ENCODE measurements at regions of chr5 and their contacts with region 1.

Region 1: GRCh38 chr5:91383027-91383955 is at the start of gene ARRDC3:
- DNase-seq: peak; percentile 97
- ATAC-seq: peak; percentile 43
- H3K4me3 Mint-ChIP-seq: peak within 1 kb of the TSS; percentile 93
- H3K27ac Mint-ChIP-seq: peak within 1 kb of the TSS; percentile 97
- H3K4me1 Mint-ChIP-seq: peaks cover 28% of the 10 kb centered on the region
- H3K27me3 Mint-ChIP-seq: no peaks in the 10 kb centered on the region
- CTCF ChIP-seq: no peak
- total RNA-seq, gene ARRDC3: 56.3 and 65.3 TPM in 2 replicates

Region 2: DNA sequence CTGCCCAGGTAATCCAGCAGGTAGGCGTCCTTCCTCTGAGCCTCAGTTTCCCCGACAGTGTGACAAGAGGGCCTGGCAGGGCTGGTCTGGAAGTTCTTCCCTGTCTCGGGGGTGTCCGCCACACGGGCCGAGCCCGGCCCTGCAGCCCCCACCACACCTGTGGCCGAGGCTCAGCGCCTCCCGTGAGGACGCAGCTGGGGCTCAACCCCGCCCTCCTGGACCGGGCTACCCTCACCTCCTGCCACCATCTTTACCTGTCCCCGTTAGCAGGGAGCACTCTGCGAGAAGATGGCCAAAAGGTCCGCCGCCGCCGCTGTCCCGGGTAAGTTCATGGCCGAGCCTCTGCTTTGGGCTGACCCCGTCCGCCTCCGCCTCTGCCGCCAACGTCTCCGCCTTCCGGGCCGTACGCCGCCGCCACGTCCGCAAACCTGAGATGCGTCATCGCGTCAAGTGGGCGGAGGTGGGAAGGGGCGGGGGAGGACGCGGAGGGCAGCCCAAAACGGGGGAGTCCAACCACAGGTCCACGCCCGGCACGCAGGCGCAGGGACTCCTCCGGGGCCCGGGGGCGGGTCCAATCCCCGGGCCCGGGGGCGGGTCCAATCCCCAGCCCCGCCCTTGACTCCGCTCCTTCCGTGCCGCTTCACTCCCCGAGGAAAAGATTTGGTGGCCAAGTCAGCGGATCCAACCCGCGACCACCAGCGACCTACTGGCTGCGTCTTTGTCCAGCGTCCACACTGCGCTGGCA is 853.9 kb before region 1 on chr5 and contains the start of gene LYSMD3:
- CTCF ChIA-PET with region 1: no interaction called
- POLR2A ChIA-PET with region 1: interaction called, 8 read pairs
- intact Hi-C with region 1: loop called (anchors 2 kb)
- DNase-seq: peak; percentile 95
- ATAC-seq: peak; percentile 93
- H3K4me3 Mint-ChIP-seq: peak within 1 kb of the TSS; percentile 100
- H3K27ac Mint-ChIP-seq: peak within 1 kb of the TSS; percentile 97
- H3K4me1 Mint-ChIP-seq: peaks cover 33% of the 10 kb centered on the region
- H3K27me3 Mint-ChIP-seq: peaks cover 20% of the 10 kb centered on the region
- CTCF ChIP-seq: no peak
- total RNA-seq, gene LYSMD3: 18.3 and 18.4 TPM in 2 replicates

Region 3: GRCh38 chr5:91101600-91102379 is 281.5 kb before region 1 on chr5:
- CTCF ChIA-PET with region 1: interaction called, 46 read pairs
- POLR2A ChIA-PET with region 1: interaction called, 5 read pairs
- intact Hi-C with region 1: loop called (anchors 1 kb)
- DNase-seq: no peak
- ATAC-seq: peak; percentile 92
- H3K4me3 Mint-ChIP-seq: no peak overlapping the region
- H3K27ac Mint-ChIP-seq: no peak overlapping the region
- H3K4me1 Mint-ChIP-seq: no peaks in the 10 kb centered on the region
- H3K27me3 Mint-ChIP-seq: no peaks in the 10 kb centered on the region
- CTCF ChIP-seq: no peak

Region 4: DNA sequence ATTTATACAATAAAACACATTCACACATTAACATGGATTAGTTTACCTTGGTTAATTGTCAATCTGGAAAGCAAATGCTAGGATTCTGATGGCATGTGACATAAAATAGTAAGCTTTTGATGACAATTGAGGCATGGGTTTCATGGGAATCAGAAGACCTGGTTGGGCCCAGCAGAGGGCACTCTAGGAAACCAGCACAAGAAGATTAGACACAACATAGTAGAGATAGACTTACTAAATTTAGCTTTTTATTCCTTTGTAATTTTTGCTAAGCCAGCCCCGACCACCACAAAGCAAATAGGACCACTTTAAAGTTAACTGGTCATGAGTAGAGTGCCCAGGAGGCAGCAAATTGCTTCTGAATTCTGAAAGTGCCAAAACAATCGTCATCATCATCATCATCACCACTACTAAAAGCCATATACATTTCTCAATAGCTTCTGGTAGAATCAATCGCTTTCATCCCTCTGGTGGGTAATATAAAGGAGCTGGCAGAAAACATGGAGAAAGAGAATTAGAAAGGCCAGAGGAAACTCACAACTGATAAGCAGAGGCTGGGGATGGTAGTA is 163.4 kb before region 1 on chr5:
- CTCF ChIA-PET with region 1: interaction called, 153 read pairs
- POLR2A ChIA-PET with region 1: interaction called, 23 read pairs
- intact Hi-C with region 1: no loop called
- DNase-seq: no peak
- ATAC-seq: no peak
- H3K4me3 Mint-ChIP-seq: no peak overlapping the region
- H3K27ac Mint-ChIP-seq: no peak overlapping the region
- H3K4me1 Mint-ChIP-seq: no peaks in the 10 kb centered on the region
- H3K27me3 Mint-ChIP-seq: peaks cover 3% of the 10 kb centered on the region
- CTCF ChIP-seq: no peak

Region 5: DNA sequence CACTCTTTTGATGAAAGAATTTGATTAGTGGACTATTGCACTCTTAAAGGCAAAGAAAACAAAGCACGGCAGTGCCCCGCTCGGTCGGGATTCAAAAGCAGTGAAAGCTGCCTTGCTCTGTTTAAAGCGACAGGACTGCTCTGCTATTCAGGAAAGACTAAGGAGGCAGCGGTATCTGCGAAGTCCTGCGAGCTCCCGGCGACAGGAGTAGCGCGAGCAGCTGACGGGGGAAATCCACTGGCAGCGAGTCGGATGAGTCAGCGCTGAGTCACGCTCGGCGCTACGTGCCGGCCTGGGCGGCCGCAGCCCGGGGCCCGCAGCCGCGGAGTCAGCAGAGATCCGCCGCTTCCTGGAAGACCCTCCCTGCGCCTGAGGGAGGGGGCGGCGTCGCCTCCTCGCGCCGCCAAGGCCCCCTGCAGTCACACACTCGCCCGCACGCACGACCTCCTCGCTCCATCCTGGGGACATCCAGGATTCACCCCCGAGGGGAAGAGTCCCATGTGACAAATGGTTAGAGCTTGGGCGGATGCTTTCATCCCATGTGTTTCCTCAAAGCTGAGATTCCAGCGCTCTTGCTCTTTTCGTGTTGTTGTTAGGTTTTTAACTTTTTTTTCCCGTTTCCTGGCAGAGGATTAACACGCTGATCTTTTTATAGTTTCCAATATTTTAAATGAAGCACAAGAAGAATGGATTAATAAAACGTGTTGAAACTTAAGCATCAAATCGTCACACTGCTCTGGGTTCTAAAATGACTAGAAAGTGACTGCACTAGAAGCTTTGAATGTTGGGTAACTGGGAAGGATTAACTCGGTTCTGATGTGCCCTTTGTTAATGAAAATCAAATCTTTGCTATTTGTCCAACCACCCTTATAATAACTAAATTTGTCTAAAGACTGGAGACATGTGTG is 102.7 kb before region 1 on chr5:
- CTCF ChIA-PET with region 1: interaction called, 12 read pairs
- POLR2A ChIA-PET with region 1: interaction called, 194 read pairs
- intact Hi-C with region 1: loop called (anchors 1 kb)
- DNase-seq: peak; percentile 80
- ATAC-seq: peak; percentile 88
- H3K4me3 Mint-ChIP-seq: peak overlapping the region; percentile 81
- H3K27ac Mint-ChIP-seq: peak overlapping the region; percentile 81
- H3K4me1 Mint-ChIP-seq: peaks cover 21% of the 10 kb centered on the region
- H3K27me3 Mint-ChIP-seq: peaks cover 8% of the 10 kb centered on the region
- CTCF ChIP-seq: no peak

Region 6: GRCh38 chr5:91318724-91319123 is 64.6 kb before region 1 on chr5:
- CTCF ChIA-PET with region 1: interaction called, 3 read pairs
- POLR2A ChIA-PET with region 1: interaction called, 72 read pairs
- intact Hi-C with region 1: loop called (anchors 1 kb)
- DNase-seq: no peak
- ATAC-seq: no peak
- H3K4me3 Mint-ChIP-seq: no peak overlapping the region
- H3K27ac Mint-ChIP-seq: no peak overlapping the region
- H3K4me1 Mint-ChIP-seq: peaks cover 27% of the 10 kb centered on the region
- H3K27me3 Mint-ChIP-seq: peaks cover 2% of the 10 kb centered on the region
- CTCF ChIP-seq: no peak

Region 7: DNA sequence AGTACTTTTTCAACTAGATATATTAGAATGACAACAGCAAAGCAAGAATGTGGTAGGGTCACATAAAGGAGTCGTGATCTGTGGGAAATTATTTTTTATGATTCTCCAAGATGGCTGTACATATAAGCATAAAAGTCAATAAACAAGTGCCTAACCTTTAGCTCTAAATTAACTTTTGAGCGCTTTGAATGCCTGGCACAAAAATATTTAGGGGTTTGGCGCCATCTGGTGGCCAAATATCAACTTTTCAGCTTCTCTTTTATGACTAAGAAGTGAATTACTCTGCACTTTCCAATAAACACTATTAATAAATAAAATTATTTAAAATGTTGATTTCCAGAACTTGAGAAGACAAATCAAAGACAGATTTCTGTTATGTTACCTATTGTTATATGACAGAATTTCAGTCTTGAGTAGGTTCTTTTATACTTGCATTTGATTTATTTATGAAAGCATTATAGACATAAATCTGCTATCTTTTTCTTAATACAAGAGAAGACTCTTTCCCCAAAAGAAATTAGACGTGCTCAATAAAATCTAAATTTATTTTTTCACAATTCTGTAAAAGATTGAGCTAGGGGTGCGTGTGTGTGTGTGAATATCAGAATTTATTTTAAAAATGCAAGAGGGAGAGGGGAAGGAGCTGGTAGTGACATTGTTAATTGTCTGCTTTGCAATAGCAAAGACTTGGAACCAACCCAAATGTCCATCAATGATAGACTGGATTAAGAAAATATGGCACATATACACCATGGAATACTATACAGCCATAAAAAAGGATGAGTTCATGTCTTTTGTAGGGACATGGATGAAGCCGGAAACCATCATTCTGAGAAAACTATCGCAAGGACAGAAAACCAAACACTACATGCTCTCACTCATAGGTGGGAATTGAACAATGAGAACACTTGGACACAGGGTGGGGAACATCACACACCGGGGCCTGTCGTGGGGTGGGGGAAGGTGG is 36.6 kb after region 1 on chr5:
- CTCF ChIA-PET with region 1: interaction called, 63 read pairs
- POLR2A ChIA-PET with region 1: interaction called, 3 read pairs
- intact Hi-C with region 1: loop called (anchors 1 kb)
- DNase-seq: peak; percentile 21
- ATAC-seq: no peak
- H3K4me3 Mint-ChIP-seq: no peak overlapping the region
- H3K27ac Mint-ChIP-seq: no peak overlapping the region
- H3K4me1 Mint-ChIP-seq: no peaks in the 10 kb centered on the region
- H3K27me3 Mint-ChIP-seq: no peaks in the 10 kb centered on the region
- CTCF ChIP-seq: peak; percentile 38